ENCODE measurements at regions of chr6 and their contacts with region 1.

Region 1: GRCh38 chr6:35583893-35584688 is 71.4 kb upstream of the TULP1 start:
- DNase-seq: peak; percentile 52
- H3K4me3 ChIP-seq: no peak overlapping the region
- H3K27ac ChIP-seq: peak overlapping the region in 1 of 2 experiments; percentile 55; a peak in 2 of 4 replicates
- H3K4me1 ChIP-seq: peaks cover 4 to 13% of the 10 kb centered on the region in 2 experiments; a peak in 2 of 4 replicates
- H3K27me3 ChIP-seq: no peaks in the 10 kb centered on the region
- CTCF ChIP-seq: peak; percentile 91
- EP300 ChIP-seq: no peak
- RAD21 ChIP-seq: peak; percentile 97

Region 2: DNA sequence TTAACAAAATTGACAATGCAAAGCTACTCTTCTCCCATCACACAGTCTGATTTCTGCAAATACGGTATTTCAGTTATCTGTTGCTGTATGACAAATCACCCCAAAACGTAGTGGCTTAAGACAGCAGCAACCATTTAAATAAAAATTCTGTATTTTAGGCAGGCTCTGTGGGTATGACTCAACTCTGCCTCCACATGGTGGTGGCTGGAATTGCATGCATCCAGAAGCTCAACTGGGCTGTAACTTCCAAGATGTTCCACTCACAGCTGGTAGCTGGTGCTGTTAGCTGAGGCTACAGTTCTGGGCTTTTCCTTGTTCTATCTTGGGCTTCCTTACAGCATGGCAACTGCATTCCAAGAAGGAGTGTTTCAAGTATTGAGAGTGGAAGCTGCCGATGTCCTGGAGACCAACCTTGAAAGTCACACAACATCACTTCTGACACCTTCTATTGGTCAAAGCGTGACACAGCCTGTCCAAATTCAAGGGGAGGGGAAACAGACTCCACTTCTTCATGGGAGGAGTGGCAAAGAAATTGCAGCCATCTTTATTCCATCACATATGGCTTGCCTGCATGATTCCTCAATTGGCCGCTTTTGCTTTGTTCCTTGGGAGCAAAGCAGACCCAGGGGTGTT is 31.7 kb before region 1 on chr6:
- CTCF ChIA-PET with region 1: interaction called, 14 read pairs
- POLR2A ChIA-PET with region 1: no interaction called
- DNase-seq: peak; percentile 40
- H3K4me3 ChIP-seq: no peak overlapping the region
- H3K27ac ChIP-seq: no peak overlapping the region
- H3K4me1 ChIP-seq: no peaks in the 10 kb centered on the region; a peak in 1 of 4 replicates
- H3K27me3 ChIP-seq: no peaks in the 10 kb centered on the region
- CTCF ChIP-seq: peak; percentile 66
- EP300 ChIP-seq: no peak
- RAD21 ChIP-seq: peak; percentile 75

Region 3: DNA sequence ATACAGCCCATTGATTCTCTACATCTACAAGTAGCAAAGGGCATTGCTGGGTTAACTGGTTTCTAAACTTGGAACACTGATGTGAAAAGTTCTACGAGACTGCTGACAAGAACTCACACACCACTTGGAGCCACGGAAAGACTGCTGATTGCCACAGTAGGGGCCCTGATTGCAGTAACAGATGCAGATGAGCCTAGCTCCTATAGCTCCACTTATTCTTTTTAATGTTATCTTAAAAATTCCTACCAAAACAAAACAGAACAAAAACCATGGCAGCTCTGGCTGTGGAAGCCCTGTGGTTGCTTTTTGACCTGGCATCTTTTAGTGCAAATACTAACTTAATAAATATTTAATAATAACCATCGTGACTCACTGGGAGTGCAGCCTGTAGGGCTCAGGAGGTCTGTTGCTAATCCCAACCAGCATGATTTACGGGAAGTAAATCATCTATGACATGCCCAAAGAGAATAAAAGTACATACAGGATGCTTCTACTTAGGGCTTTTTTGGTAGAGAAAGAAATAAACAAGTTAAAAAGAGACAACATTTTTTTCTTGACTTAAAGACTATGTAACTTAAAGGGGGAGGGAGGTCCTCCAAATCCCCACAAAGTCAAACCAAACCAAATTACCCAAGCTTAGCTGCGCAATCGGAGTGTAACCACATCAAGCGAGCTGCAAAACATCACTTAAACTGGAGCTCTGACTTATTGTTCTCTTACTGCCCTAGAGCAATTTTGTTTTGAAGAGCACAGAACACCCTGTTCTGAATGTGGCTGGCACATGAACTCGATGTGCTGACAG is 17.4 kb after region 1 on chr6:
- CTCF ChIA-PET with region 1: interaction called, 14 read pairs
- POLR2A ChIA-PET with region 1: no interaction called
- DNase-seq: peak; percentile 58
- H3K4me3 ChIP-seq: peak overlapping the region; percentile 33 to 47
- H3K27ac ChIP-seq: peak overlapping the region; percentile 88 to 98
- H3K4me1 ChIP-seq: peaks cover 30 to 50% of the 10 kb centered on the region in 2 experiments
- H3K27me3 ChIP-seq: no peaks in the 10 kb centered on the region
- CTCF ChIP-seq: no peak
- EP300 ChIP-seq: peak in 1 of 2 experiments; percentile 75; a peak in 2 of 4 replicates
- RAD21 ChIP-seq: no peak

Region 4: DNA sequence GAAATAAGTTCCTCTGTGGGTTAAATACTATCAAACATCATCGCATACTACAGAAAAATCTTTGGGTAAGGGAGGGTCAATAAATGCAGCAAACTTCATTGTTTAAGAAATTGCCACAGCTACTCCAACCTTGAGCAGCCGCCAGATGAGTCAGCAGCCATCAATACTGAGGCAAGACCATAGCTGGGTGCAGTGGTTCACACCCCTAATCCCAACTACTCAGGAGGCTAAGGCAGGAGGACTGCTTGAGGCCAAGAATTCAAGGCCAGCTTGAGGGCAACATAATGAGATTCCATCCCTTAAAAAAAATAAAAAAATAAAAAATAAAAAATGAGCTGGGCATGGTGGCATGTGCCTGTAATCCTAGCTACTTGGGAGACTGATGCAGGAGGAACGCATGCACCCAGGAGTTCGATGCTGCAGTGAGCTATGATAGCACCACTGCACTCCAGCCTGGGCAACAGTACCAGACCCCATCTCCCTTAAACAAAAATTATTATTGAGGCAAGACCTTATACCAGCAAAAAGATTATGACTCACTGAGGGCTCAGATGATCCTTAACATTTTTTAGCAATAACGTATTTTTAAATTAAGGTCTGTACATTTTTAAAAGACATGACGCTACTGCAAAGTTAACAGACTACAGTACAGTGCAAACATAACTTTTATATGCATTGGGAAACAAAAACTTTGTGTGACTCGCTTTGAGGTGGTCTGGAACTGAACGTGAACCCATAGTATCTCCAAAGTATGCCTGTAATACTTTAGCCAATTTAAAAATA is 328.0 kb after region 1 on chr6:
- CTCF ChIA-PET with region 1: no interaction called
- POLR2A ChIA-PET with region 1: no interaction called
- DNase-seq: no peak
- H3K4me3 ChIP-seq: no peak overlapping the region
- H3K27ac ChIP-seq: no peak overlapping the region
- H3K4me1 ChIP-seq: no peaks in the 10 kb centered on the region
- H3K27me3 ChIP-seq: no peaks in the 10 kb centered on the region
- CTCF ChIP-seq: no peak
- EP300 ChIP-seq: no peak
- RAD21 ChIP-seq: no peak

Measured in SK-N-SH (cell line).